Activated B cell treated with CpG ODN at 0.5 μM for 24 hours (primary cell): ENCODE measurements at regions of chr13 and their contacts with region 1.

Region 1: DNA sequence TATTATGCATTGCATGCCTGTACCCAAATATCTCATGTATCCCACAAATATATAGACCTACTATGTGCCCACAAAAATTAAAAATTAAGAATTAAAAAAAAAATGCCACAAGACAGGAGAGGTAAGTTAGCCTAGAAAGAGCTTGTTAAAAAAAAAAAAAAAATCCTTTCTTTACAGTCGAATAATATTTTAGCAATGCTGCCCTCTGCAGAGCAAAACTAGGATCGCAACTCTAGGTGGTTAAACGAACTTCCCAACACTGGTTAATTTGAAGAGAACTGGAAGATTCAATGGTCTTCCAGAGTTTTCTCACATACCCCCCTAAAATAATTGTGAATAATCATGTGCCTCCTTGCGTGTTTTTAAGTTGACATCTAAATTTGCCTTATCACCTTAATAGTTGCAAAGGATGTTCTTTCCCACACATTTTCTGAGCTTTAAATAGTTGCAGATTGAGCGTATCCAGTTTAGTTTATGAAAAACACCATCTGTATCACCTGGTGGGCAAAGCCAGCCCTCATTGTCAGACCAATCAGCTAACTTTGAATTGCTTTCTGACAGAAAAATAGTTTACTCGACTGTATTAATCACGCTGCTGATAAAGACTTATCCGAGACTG is 47.4 kb upstream of the RCBTB2 start:
- DNase-seq: no peak
- ATAC-seq: peak; percentile 47
- H3K4me3 Mint-ChIP-seq: no peak overlapping the region
- H3K27ac Mint-ChIP-seq: no peak overlapping the region
- H3K4me1 Mint-ChIP-seq: peaks cover 21% of the 10 kb centered on the region
- H3K27me3 Mint-ChIP-seq: peaks cover 51% of the 10 kb centered on the region
- CTCF ChIP-seq: peak; percentile 38

Region 2: GRCh38 chr13:48078251-48078656 is 502.0 kb before region 1 on chr13:
- CTCF ChIA-PET with region 1: interaction called, 13 read pairs
- POLR2A ChIA-PET with region 1: no interaction called
- intact Hi-C with region 1: loop called (anchors 1 kb)
- DNase-seq: peak; percentile 24
- ATAC-seq: peak; percentile 100
- H3K4me3 Mint-ChIP-seq: no peak overlapping the region
- H3K27ac Mint-ChIP-seq: peak overlapping the region; percentile 61
- H3K4me1 Mint-ChIP-seq: peaks cover 10% of the 10 kb centered on the region
- H3K27me3 Mint-ChIP-seq: no peaks in the 10 kb centered on the region
- CTCF ChIP-seq: no peak

Region 3: DNA sequence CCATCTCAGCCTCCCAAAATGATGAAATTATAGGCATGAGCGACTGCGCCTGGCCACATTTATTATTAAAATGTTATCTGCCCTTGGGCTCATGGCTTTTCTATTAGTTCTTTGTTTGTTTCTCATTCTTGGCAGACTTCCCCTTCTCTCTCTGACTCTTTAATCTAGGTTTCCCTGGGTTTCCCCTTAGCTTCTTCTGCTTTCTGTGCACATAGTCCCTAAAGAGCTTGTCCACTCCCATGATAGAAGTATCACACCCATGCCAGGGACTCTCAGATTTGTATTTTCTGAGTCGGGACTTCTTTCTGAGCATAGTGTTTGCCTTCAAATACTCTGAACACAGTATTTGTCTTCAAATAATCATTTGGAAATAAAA is 385.9 kb before region 1 on chr13:
- CTCF ChIA-PET with region 1: interaction called, 4 read pairs
- POLR2A ChIA-PET with region 1: interaction called, 5 read pairs
- intact Hi-C with region 1: loop called (anchors 1 kb)
- DNase-seq: no peak
- ATAC-seq: peak; percentile 98
- H3K4me3 Mint-ChIP-seq: peak overlapping the region; percentile 60
- H3K27ac Mint-ChIP-seq: peak overlapping the region; percentile 82
- H3K4me1 Mint-ChIP-seq: peaks cover 26% of the 10 kb centered on the region
- H3K27me3 Mint-ChIP-seq: peaks cover 4% of the 10 kb centered on the region
- CTCF ChIP-seq: no peak

Region 4: DNA sequence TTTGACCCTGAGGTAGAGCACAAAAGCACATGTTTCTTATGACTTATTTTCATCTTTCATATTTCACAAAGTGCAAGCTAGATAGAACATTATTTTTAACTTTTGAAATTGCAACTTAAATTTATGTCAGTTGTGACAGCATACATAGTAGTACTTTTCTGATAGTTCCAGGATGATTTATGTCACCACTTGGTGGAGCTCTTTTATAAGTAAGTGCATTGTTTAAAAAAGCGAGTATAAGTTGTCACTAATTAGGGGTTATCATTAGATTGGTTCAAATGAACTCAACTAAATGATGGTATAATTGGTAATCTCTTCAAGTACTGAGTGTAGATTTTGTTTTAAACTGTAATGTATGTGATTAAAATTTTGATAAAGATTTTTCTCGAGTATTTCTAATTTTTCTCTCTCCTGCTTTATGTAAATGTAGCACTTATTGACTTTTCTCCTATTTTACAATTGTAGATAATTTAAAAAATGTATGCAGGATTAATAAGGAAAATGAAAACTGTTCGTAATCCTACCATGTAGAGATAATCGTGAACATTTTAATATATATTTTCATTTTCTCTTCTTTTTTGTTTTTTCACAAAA is 245.7 kb before region 1 on chr13:
- CTCF ChIA-PET with region 1: interaction called, 92 read pairs
- POLR2A ChIA-PET with region 1: interaction called, 28 read pairs
- intact Hi-C with region 1: loop called (anchors 1 kb)
- DNase-seq: no peak
- ATAC-seq: peak; percentile 37
- H3K4me3 Mint-ChIP-seq: no peak overlapping the region
- H3K27ac Mint-ChIP-seq: no peak overlapping the region
- H3K4me1 Mint-ChIP-seq: peaks cover 17% of the 10 kb centered on the region
- H3K27me3 Mint-ChIP-seq: no peaks in the 10 kb centered on the region
- CTCF ChIP-seq: peak; percentile 42

Region 5: DNA sequence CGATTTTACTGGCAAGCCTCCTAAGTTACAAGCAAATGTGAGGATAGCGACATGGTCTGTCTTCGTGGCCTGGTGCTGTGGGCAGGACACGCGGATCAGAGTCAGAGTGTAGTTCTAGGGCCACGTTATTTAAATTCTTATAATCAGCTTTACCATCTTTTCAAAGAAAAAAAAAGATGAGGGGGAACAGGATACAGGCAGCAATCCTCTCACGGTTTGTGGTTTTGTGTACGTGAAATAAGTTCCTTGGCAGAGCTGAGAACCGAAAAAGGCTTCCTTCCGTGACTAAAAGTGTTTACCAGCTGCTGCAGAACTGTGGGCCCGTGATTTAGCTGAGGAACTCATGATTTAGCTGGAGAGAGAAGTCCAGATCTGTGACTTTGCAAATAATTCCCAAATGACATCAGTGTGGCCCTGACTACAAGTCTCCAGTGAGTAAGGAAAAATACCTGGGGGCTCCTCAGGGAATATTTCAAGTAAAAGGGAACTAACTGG is 74.7 kb before region 1 on chr13:
- CTCF ChIA-PET with region 1: interaction called, 6 read pairs
- POLR2A ChIA-PET with region 1: interaction called, 5 read pairs
- intact Hi-C with region 1: loop called (anchors 1 kb)
- DNase-seq: no peak
- ATAC-seq: peak; percentile 85
- H3K4me3 Mint-ChIP-seq: peak overlapping the region; percentile 75
- H3K27ac Mint-ChIP-seq: peak overlapping the region; percentile 59
- H3K4me1 Mint-ChIP-seq: peaks cover 55% of the 10 kb centered on the region
- H3K27me3 Mint-ChIP-seq: peaks cover 20% of the 10 kb centered on the region
- CTCF ChIP-seq: no peak

Region 6: GRCh38 chr13:48695776-48696175 is 115.5 kb after region 1 on chr13:
- CTCF ChIA-PET with region 1: no interaction called
- POLR2A ChIA-PET with region 1: no interaction called
- intact Hi-C with region 1: no loop called
- DNase-seq: no peak
- ATAC-seq: no peak
- H3K4me3 Mint-ChIP-seq: no peak overlapping the region
- H3K27ac Mint-ChIP-seq: no peak overlapping the region
- H3K4me1 Mint-ChIP-seq: no peaks in the 10 kb centered on the region
- H3K27me3 Mint-ChIP-seq: peaks cover 8% of the 10 kb centered on the region
- CTCF ChIP-seq: no peak

Region 7: DNA sequence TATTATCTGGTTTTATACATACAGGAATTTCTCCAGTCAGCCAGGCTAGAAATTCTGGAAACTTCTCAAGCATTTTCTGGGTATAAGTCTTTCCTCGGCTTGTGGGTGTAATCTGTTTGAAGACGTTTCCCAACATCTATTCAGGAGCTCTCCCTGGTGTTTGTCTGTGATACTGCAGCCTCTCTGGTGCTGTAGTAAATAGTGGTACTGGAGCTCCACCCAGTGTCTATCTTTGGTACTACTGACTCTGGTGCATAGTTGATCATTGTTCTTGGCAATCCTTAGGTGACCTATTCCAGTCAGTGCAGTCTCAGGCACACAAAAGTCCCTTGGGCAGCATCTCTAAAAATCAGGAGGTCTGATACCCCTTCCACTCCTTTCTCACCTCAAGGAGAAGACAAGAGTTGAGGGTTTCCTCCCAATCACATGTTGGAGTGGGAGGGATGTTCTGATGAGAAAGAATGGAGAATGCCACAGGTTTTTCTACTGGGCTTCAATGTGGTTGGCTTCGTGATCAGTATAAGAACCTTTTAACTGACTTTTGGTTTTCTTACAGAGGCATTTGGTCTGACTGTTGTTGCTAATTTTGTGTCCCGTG is 188.9 kb after region 1 on chr13:
- CTCF ChIA-PET with region 1: interaction called, 4 read pairs
- POLR2A ChIA-PET with region 1: no interaction called
- intact Hi-C with region 1: loop called (anchors 1 kb)
- DNase-seq: peak; percentile 25
- ATAC-seq: peak; percentile 100
- H3K4me3 Mint-ChIP-seq: no peak overlapping the region
- H3K27ac Mint-ChIP-seq: no peak overlapping the region
- H3K4me1 Mint-ChIP-seq: peaks cover 2% of the 10 kb centered on the region
- H3K27me3 Mint-ChIP-seq: peaks cover 17% of the 10 kb centered on the region
- CTCF ChIP-seq: peak; percentile 38